Breast epithelium (tissue), 4 donors: ENCODE measurements at regions of chr7 and their contacts with region 1.

Region 1: DNA sequence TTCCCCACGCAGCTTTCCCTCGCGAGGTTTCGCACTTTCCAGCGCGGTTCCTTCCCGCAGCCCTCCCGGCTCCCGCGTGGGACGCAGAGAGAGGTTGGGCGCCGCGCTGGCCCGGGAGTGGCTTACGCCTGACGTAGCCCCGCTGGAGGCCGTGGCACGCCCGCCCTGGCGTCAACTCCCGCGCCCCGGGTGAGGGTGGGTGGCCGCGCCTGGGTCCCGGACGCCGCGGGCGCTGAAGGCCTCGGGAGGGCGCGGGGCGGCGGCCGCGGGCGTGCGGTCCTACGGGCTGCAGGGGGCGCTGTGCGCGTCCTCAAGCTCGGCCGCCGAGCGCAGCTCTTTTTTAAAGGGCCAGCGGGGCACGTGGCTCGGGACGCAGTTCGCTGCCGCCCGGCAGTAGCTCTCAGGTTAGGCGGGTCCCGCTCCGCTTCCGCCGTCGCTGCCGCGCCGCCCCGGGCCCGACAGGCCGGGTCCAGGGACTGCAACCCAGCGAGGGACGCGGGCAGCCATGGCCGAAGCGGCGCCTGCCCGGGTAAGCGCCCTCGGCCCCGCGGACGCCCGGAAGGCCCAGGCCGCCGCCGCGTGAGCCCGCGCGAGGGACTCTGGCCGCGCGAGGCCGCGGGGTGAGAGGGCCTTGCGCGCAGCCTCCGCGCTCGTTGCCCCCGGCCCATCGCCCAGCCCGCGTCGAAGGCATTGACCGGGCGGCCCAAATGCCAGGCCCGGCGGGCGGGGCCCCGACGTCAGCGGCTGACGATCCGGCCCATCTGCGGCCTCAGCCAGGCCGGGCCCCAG is at the start of gene ZNF783:
- DNase-seq: peak; percentile 62 to 78
- H3K4me3 ChIP-seq: peak within 1 kb of the TSS; percentile 47 to 96 (median 71)
- H3K27ac ChIP-seq: peak within 1 kb of the TSS; percentile 94 to 99
- H3K4me1 ChIP-seq: no peaks in the 10 kb centered on the region
- H3K27me3 ChIP-seq: no peaks in the 10 kb centered on the region
- CTCF ChIP-seq: peak in 1 of 3 donors; percentile 93
- POLR2A ChIP-seq: no peak
- total RNA-seq, gene ZNF783: 13.6 to 23.9 (median 17.6) TPM

Region 2: GRCh38 chr7:149611324-149611651 is 349.3 kb after region 1 on chr7:
- intact Hi-C with region 1: loop called (anchors 5 kb)
- DNase-seq: no peak
- H3K4me3 ChIP-seq: no peak overlapping the region
- H3K27ac ChIP-seq: no peak overlapping the region
- H3K4me1 ChIP-seq: no peaks in the 10 kb centered on the region
- H3K27me3 ChIP-seq: no peaks in the 10 kb centered on the region
- CTCF ChIP-seq: no peak
- POLR2A ChIP-seq: no peak

Region 3: GRCh38 chr7:151110941-151111645 is 1849.1 kb after region 1 on chr7:
- intact Hi-C with region 1: loop called (anchors 5 kb)
- DNase-seq: peak; percentile 70 to 83
- H3K4me3 ChIP-seq: peak overlapping the region in 1 of 3 donors; percentile 5
- H3K27ac ChIP-seq: no peak overlapping the region
- H3K4me1 ChIP-seq: peaks cover 0 to 9% of the 10 kb centered on the region in 2 donors
- H3K27me3 ChIP-seq: no peaks in the 10 kb centered on the region
- CTCF ChIP-seq: peak; percentile 82 to 90 (median 89)
- POLR2A ChIP-seq: no peak